Left ventricle myocardium superior (tissue), 1 donor: ENCODE measurements at regions of chr18 and their contacts with region 1.

Region 1: DNA sequence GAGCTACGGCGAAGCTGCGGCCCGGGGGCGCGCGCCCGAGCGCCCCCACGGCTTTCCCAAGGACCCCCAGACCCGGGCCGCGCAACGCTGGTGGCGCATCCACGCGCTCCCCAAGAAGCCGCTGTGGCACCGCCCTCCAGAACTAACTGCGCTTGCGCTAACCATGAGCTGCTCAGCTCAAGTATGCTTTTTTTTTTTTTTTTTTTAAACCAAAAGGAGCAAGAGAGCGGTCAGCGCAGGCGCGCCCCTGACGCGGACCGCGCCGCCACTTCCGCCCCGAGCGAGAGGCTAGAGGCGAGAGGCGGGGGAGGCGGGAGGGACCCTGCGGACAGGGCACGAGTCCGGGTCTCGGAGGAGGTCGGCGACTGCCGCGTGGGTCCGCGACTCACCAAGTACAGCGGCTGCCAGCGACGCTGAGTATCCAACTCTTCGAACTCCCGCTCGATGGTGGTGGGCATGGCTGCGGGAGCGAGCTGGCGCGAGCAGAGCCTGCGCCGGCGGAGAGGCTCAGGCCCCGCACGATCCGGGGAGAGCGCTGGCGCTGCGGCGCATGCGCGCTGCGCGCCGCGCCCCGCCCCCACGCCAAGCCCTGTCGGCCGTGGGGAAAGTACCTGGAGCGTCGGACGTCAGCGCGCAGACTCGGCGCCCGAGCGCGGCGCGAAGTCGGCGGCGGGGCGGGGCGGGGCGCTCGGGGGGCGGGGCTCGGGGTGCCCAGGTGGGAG is at the start of gene PTPN2:
- DNase-seq: peak; percentile 97
- ATAC-seq: peak; percentile 96
- total RNA-seq, gene PTPN2: 11.7 TPM

Region 2: GRCh38 chr18:12947355-12948041 is 63.7 kb after region 1 on chr18 and contains the start of gene SEH1L:
- intact Hi-C with region 1: loop called (anchors 10 kb)
- DNase-seq: peak; percentile 100
- ATAC-seq: peak; percentile 97
- total RNA-seq, gene SEH1L: 17.3 TPM

Region 3: DNA sequence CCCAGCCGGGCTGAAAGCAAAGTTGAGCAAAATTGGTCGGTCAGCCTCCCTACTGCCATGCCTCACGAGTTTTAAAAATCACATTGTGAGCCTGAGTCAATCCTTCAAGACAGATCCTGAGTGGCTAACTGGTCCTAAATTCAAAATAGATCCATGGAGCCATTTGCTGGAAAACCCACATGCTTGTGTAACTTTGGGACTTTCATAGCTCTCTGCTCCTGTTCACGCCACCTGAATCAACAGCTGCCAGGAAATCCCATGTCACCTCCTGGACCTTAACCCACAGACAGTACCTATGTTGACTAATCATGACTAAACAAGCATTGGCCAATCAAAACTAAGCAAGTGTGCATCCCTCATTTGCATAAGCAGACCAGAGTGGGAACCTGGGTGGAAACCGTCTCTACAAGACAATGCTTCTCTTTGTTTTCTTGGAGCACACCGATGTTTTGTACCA is 291.9 kb after region 1 on chr18:
- intact Hi-C with region 1: no loop called
- DNase-seq: no peak
- ATAC-seq: no peak